Ascending aorta (tissue), 2 donors: ENCODE measurements at regions of chr18 and their contacts with region 1.

Region 1: GRCh38 chr18:75904416-75904815 is 476.9 kb upstream of the SMIM21 start:
- DNase-seq: no peak
- H3K4me3 ChIP-seq: no peak overlapping the region
- H3K27ac ChIP-seq: no peak overlapping the region
- H3K4me1 ChIP-seq: no peaks in the 10 kb centered on the region
- H3K27me3 ChIP-seq: no peaks in the 10 kb centered on the region
- CTCF ChIP-seq: no peak

Region 2: DNA sequence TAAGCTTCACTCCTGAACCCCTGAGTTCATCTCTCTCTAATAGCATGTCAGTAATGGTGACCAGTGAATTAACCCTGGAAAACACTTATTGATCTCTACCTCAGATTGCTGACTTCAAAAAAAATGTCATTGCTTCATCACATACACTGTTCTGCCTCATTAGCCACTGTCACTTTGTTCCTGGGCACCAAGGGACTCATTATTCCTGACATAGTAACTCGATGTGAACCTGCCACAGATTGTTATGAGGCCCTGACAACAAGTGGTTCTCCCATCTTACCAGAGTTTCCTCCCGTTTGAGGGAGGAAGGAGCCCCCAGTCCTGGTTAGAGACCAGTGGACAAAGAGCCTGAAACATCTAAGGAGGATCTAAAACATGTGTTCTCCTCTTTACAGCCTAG is 73.6 kb before region 1 on chr18:
- intact Hi-C with region 1: loop called (anchors 10 kb)
- DNase-seq: no peak
- H3K4me3 ChIP-seq: no peak overlapping the region
- H3K27ac ChIP-seq: no peak overlapping the region
- H3K4me1 ChIP-seq: no peaks in the 10 kb centered on the region
- H3K27me3 ChIP-seq: no peaks in the 10 kb centered on the region
- CTCF ChIP-seq: no peak

Region 3: DNA sequence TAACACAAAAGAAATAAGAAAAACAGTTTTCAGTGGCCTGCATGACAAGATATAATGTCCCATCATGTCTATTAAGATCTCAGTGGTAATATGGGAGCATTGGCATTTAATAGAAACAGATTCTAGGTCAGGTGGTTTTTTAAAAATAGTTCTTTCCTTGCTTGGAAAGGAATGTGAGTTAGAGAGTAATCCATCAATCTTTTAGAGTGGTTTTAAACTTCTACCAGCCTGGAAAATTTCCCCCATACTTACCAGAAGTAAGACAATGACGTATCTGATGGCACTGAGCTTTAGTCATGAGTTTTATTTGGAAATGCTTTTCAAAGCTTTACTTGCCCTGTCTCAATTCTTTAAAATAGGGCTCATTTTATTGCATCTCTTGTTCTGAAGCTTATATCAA is 35.3 kb before region 1 on chr18:
- intact Hi-C with region 1: no loop called
- DNase-seq: no peak
- H3K4me3 ChIP-seq: no peak overlapping the region
- H3K27ac ChIP-seq: peak overlapping the region in 1 of 2 donors; percentile 53
- H3K4me1 ChIP-seq: peaks cover 0 to 4% of the 10 kb centered on the region in 2 donors
- H3K27me3 ChIP-seq: no peaks in the 10 kb centered on the region
- CTCF ChIP-seq: no peak